ENCODE measurements at regions of chr7 and their contacts with region 1.

Region 1: GRCh38 chr7:104700336-104700735 is 313.7 kb upstream of the KMT2E start:
- DNase-seq: no peak
- H3K4me3 ChIP-seq: no peak overlapping the region
- H3K27ac ChIP-seq: no peak overlapping the region
- H3K4me1 ChIP-seq: no peaks in the 10 kb centered on the region
- H3K27me3 ChIP-seq: no peaks in the 10 kb centered on the region
- CTCF ChIP-seq: no peak
- POLR2A ChIP-seq: no peak

Region 2: GRCh38 chr7:103547451-103548284 is 1152.7 kb before region 1 on chr7:
- intact Hi-C with region 1: no loop called
- DNase-seq: no peak
- H3K4me3 ChIP-seq: no peak overlapping the region
- H3K27ac ChIP-seq: no peak overlapping the region
- H3K4me1 ChIP-seq: no peaks in the 10 kb centered on the region
- H3K27me3 ChIP-seq: no peaks in the 10 kb centered on the region
- CTCF ChIP-seq: no peak
- POLR2A ChIP-seq: no peak

Region 3: GRCh38 chr7:104408371-104408770 is 292.0 kb before region 1 on chr7:
- intact Hi-C with region 1: loop called (anchors 5 kb)
- DNase-seq: no peak
- H3K4me3 ChIP-seq: no peak overlapping the region
- H3K27ac ChIP-seq: no peak overlapping the region
- H3K4me1 ChIP-seq: no peaks in the 10 kb centered on the region
- H3K27me3 ChIP-seq: no peaks in the 10 kb centered on the region
- CTCF ChIP-seq: no peak
- POLR2A ChIP-seq: no peak

Measured in breast epithelium (tissue), 4 donors.